K562 (cell line): ENCODE measurements at regions of chr3 and their contacts with region 1.

Region 1: DNA sequence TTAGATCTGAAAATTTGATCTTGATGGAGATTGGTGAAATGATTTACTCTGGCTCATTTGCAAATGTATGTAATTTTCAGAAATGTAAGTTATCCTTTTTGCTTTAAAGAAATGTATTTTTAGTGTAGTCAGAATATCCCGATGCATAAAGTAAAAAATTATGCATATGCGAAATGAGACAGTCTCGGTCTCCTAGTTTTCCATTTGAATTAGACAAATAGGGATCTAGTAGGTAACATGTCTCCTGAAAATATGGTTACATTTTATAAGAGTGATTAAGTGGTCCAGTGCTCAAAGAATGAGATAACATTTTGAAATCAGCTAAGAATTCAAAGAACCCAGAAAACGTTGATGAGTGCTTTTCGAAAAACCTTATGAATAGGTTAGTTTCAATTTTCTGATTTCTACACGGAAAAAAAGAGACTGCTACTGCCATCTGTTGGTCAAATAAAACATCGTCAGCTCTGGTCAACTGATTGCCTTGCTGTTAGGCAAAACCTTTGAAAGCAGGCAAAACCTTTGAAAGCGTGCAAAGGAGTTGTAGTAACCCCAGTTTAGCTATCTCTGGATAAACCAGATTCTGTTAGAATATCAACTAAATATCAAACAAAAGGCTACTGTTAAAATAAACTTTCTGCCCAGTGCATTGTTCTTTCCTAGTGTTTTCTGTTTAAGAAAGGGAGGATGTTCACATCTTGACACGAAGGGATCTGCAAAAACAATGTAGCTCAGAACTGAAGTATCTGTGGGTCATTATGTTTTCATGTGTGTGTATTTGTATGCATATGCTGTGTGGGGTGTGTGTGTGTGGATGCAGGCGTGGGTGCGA is 59.3 kb upstream of the CHMP2B start:
- DNase-seq: peak; percentile 7 to 42 (median 19)
- ATAC-seq: peak; percentile 55; the same call in 2 of the 3 replicates
- H3K4me3 ChIP-seq: no peak overlapping the region
- H3K27ac ChIP-seq: no peak overlapping the region
- H3K4me1 ChIP-seq: no peaks in the 10 kb centered on the region
- H3K27me3 ChIP-seq: no peaks in the 10 kb centered on the region
- CTCF ChIP-seq: peak; percentile 32 to 55 (median 40); a peak in 4 of 6 replicates
- EP300 ChIP-seq: no peak
- POLR2A ChIP-seq: no peak
- RAD21 ChIP-seq: peak in 1 of 2 experiments; percentile 41; a peak in 2 of 4 replicates

Region 2: DNA sequence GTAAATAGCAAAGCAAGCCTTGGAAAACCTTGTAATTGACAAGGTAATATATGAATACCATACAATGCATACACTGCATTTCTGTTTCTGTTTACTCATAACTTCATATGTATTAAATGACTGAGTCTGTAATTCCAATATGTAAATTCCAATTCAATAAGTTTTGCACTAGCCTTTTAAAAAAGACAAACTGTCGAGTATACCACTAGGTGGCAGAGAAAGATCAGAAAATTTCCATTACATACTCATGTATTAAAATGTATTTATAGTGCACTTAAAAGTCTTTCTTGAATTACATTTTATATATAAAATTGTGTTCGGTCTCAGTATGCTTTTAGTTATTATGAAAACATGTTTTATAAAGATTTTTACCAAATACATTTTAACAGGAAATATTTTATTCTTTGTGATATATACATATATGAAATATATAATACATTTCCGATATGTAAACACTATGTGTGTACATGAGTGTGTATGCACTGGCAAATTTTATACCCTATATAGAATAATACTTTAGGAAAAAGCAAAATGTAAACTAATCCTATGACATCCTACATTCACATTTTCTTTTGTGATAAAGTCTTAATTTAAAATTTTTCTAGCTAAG is 393.7 kb before region 1 on chr3:
- CTCF ChIA-PET with region 1: no interaction called
- POLR2A ChIA-PET with region 1: no interaction called
- in situ Hi-C with region 1: no loop called
- intact Hi-C with region 1: loop called (anchors 1 kb)
- DNase-seq: peak in 2 of 4 experiments; percentile 1 to 11
- ATAC-seq: no peak
- H3K4me3 ChIP-seq: no peak overlapping the region
- H3K27ac ChIP-seq: no peak overlapping the region
- H3K4me1 ChIP-seq: no peaks in the 10 kb centered on the region
- H3K27me3 ChIP-seq: no peaks in the 10 kb centered on the region
- CTCF ChIP-seq: peak in 1 of 3 experiments; percentile 40; a peak in 2 of 6 replicates
- EP300 ChIP-seq: no peak
- POLR2A ChIP-seq: no peak
- RAD21 ChIP-seq: peak; percentile 34 to 52

Region 3: GRCh38 chr3:86923071-86923491 is 244.8 kb before region 1 on chr3:
- CTCF ChIA-PET with region 1: no interaction called
- POLR2A ChIA-PET with region 1: no interaction called
- in situ Hi-C with region 1: no loop called
- intact Hi-C with region 1: no loop called
- DNase-seq: no peak
- ATAC-seq: no peak
- H3K4me3 ChIP-seq: no peak overlapping the region
- H3K27ac ChIP-seq: no peak overlapping the region
- H3K4me1 ChIP-seq: no peaks in the 10 kb centered on the region
- H3K27me3 ChIP-seq: no peaks in the 10 kb centered on the region
- CTCF ChIP-seq: no peak
- EP300 ChIP-seq: no peak
- POLR2A ChIP-seq: no peak
- RAD21 ChIP-seq: no peak

Region 4: DNA sequence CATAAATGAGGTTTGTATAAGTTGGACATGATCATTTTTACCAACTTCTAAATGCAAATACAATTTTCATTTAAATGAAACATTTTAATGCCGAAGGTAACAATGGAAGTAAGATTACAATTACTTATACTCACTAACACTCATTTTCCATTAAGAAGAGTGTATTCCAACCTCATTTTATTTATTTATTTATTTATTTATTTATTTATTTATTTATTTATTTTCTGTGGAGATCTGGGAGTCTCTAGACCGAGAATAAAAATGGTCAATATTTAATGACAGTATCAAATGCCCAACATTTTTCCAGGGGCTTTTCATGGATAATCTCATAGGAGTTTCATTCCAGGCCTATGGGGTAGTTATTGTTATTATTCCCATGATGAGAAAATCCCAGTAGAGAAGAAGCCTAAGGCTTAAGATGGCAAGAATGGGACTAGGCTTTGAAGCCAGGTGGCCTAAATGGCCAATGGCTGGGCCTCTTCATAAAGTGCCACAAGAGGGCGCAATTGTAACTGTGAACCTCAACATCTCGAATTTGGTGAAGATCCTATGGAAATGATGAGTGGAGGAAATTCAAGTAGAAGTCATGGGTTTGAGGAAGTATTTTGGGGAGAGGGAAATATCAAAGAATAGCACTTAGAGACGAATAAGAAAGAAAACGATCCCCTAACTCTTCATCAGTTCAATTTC is 198.2 kb before region 1 on chr3:
- CTCF ChIA-PET with region 1: interaction called, 5 read pairs
- POLR2A ChIA-PET with region 1: no interaction called
- in situ Hi-C with region 1: no loop called
- intact Hi-C with region 1: loop called (anchors 1 kb)
- DNase-seq: peak; percentile 35 to 64 (median 56)
- ATAC-seq: peak; percentile 76
- H3K4me3 ChIP-seq: no peak overlapping the region
- H3K27ac ChIP-seq: no peak overlapping the region
- H3K4me1 ChIP-seq: no peaks in the 10 kb centered on the region
- H3K27me3 ChIP-seq: no peaks in the 10 kb centered on the region
- CTCF ChIP-seq: peak; percentile 63 to 67 (median 65)
- EP300 ChIP-seq: no peak
- POLR2A ChIP-seq: no peak
- RAD21 ChIP-seq: peak; percentile 42 to 68